Head of caudate nucleus (tissue), 42 donors: ENCODE measurements at regions of chr5 and their contacts with region 1.

Region 1: DNA sequence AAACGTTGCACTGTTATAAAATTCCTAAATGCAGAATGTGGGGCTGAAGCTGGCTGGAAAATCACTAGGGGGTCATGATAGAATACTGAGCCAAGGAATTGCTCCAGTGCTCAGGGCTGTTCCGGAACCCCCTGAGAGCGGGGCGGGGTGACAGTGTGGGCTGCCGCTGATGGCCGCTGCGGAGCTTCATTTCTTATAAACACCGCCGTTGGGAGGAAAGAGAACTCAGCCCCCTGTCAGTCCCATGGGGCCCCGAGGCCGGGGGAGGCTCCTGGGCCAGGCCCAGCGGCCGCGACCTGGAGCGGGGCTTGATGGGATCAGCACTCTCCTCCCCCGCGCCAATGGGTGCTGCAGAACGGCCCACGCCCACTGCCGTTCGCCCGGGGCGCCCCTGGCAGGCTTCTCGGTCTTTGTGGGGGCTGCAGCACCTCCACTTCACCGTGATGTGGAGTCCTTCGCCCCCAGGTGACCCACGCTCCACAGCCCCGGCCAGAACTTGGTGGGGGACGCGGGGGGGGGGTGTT is 5.2 kb upstream of the IRF1 start:
- DNase-seq: peak; percentile 34 to 84 (median 70)

Region 2: GRCh38 chr5:132410451-132411381 is 85.0 kb before region 1 on chr5:
- intact Hi-C with region 1: loop called (anchors 2 kb)
- DNase-seq: peak in 41 of 42 donors; percentile 40 to 89 (median 77)

Region 3: GRCh38 chr5:132883261-132883834 is 387.6 kb after region 1 on chr5:
- intact Hi-C with region 1: no loop called
- DNase-seq: peak in 39 of 42 donors; percentile 27 to 87 (median 65)